Naive thymus-derived CD4-positive, alpha-beta T cell (primary cell): ENCODE measurements at regions of chr4 and their contacts with region 1.

Region 1: DNA sequence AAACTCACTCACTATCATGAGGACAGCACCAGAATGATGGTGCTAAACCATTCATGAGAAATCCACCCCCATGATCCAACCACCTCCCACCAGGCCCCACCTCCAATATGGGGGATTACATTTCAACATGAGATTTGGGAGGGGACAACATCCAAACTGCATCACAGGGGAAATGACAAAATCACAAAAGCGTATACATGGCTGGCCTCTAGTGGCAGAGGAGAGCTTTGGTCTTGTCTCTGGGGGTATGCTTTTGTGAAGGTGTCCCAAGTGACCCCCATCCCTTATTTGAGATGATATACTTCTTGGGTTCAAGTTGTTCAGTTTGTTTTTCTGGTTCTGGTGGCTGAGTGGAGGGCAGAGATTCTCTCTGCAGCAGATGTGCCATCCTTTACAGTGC is 8.5 kb upstream of the SETD7 start:
- DNase-seq: peak in 1 of 9 donors; percentile 15
- ATAC-seq: no peak
- H3K4me3 ChIP-seq: no peak overlapping the region
- H3K4me3 Mint-ChIP-seq: no peak overlapping the region
- H3K27ac ChIP-seq: no peak overlapping the region
- H3K27ac Mint-ChIP-seq: no peak overlapping the region
- H3K4me1 ChIP-seq: peaks cover 9% of the 10 kb centered on the region in 2 donors
- H3K4me1 Mint-ChIP-seq: peaks cover 10 to 17% (median 13%) of the 10 kb centered on the region in 7 donors
- H3K27me3 ChIP-seq: no peaks in the 10 kb centered on the region
- H3K27me3 Mint-ChIP-seq: peaks cover 0 to 4% (median 0%) of the 10 kb centered on the region in 5 donors

Region 2: DNA sequence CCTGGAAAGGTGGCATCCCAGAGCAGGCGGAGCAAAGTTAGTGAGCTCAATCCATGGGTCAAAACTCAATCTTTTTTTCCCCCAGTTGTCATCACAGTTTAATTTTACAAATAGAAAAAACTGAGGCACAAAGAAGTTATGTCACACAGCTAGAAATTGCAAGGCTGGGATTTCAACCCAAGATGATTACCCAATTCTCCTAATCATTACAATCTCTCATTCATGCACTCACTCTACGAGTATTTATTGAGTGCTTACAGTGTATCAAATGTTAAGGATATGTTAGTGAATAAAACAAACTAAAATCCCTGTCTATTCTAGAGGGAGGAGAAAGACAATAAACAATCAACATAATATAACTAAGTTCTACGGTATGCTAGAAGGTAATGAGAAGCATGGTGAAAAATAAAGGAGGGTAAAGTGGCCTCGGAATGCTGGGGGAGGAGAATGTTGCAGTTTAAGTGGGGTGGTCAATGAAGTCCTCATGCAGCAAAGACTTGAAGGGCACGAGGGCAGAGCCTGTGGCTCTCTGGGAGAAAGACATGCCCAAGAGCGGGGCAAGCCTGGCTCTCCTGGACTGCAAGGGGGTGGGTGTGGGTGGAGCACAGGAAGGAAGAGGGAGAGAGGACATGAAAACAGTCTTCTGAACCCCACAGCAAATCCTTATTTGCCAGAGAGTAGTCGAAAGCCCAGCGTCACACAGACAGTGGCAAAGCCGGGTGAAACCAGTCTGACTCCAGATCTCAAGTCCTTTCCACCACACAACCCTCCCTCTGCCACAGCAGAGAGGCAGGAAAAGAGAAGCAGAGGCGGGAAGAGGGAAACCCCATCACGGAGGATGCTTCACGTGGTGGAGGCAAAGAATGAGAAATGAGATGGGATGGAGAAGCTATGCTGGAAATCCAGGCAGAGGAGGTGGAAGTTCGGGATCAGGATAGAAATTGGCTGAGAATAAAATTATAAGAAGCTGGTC is 62.3 kb before region 1 on chr4:
- CTCF ChIA-PET with region 1: no interaction called
- POLR2A ChIA-PET with region 1: no interaction called
- intact Hi-C with region 1: loop called in 1 of 2 experiments (anchors 1 kb)
- DNase-seq: no peak
- ATAC-seq: no peak
- H3K4me3 ChIP-seq: no peak overlapping the region
- H3K4me3 Mint-ChIP-seq: no peak overlapping the region
- H3K27ac ChIP-seq: no peak overlapping the region
- H3K27ac Mint-ChIP-seq: no peak overlapping the region
- H3K4me1 ChIP-seq: no peaks in the 10 kb centered on the region
- H3K4me1 Mint-ChIP-seq: peaks cover 0 to 7% (median 0%) of the 10 kb centered on the region in 7 donors
- H3K27me3 ChIP-seq: no peaks in the 10 kb centered on the region
- H3K27me3 Mint-ChIP-seq: peaks cover 0 to 7% (median 5%) of the 10 kb centered on the region in 5 donors

Region 3: GRCh38 chr4:139550724-139551429 is 13.6 kb before region 1 on chr4:
- CTCF ChIA-PET with region 1: no interaction called
- POLR2A ChIA-PET with region 1: no interaction called
- intact Hi-C with region 1: no loop called
- DNase-seq: no peak
- ATAC-seq: no peak
- H3K4me3 ChIP-seq: no peak overlapping the region
- H3K4me3 Mint-ChIP-seq: no peak overlapping the region
- H3K27ac ChIP-seq: no peak overlapping the region
- H3K27ac Mint-ChIP-seq: no peak overlapping the region
- H3K4me1 ChIP-seq: peaks cover 0 to 11% of the 10 kb centered on the region in 2 donors
- H3K4me1 Mint-ChIP-seq: peaks cover 11 to 31% (median 19%) of the 10 kb centered on the region in 7 donors
- H3K27me3 ChIP-seq: no peaks in the 10 kb centered on the region
- H3K27me3 Mint-ChIP-seq: peaks cover 0 to 11% (median 0%) of the 10 kb centered on the region in 5 donors

Region 4: DNA sequence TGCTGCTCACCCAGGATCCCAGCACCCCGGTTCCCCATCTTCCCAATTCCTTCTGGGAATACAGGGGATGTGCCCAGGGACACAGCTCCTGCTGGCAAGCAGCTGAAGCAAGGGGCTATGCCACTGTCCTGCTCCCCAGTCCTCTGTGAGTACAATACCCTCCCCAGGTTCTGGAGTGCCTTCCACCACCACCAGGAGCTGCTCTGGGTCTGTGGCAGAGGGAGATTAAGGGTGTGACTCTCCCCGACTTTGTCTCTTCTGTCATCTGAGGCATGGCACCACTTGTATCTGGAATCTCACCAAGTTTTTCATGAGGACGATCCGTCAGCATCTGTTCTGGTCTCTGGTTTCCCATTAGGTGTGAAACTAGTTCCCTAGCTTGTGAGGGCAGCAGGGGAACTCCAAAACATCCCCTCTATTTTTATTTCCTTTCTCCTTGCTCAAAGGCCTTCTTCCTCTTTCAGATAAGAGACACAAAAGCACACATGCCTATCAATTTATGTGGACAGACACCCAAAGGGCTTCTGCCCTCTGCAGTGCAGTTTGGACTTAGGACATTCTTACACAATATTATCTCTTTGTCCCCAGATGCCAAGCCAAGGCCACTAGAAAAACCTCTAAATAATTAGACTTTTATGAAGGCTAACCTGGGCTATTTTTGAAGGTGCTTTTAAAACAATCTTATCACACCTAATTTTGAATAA is 128.0 kb after region 1 on chr4:
- CTCF ChIA-PET with region 1: no interaction called
- POLR2A ChIA-PET with region 1: no interaction called
- intact Hi-C with region 1: no loop called
- DNase-seq: no peak
- ATAC-seq: peak; percentile 31
- H3K4me3 ChIP-seq: no peak overlapping the region
- H3K4me3 Mint-ChIP-seq: no peak overlapping the region
- H3K27ac ChIP-seq: no peak overlapping the region
- H3K27ac Mint-ChIP-seq: no peak overlapping the region
- H3K4me1 ChIP-seq: no peaks in the 10 kb centered on the region
- H3K4me1 Mint-ChIP-seq: peaks cover 0 to 8% (median 0%) of the 10 kb centered on the region in 7 donors
- H3K27me3 ChIP-seq: no peaks in the 10 kb centered on the region
- H3K27me3 Mint-ChIP-seq: no peaks in the 10 kb centered on the region

Region 5: DNA sequence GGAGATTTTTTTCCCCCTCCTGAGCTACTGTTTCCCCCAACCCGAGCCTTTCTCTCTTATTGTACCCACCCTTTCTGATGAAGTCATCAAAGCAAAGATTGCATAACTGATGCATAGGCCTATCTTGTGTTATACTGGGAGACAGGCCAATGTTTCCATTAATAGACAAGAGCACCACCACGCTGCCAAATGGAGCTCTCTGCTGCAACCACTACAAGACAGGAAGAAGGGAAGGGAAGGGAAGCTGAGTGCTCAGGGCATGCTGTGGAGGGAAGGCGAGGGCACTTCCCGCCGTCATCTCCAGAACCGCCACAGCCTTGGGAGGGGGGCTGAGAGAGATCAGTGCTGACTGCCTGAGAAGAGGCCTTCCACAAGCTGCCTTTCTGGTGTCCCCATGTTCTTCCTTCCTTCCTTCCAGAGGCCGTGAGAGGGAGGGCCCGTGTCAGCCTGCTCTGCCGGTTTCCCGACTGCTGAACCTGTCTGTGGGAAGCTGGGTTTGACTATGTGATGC is 176.1 kb after region 1 on chr4:
- CTCF ChIA-PET with region 1: no interaction called
- POLR2A ChIA-PET with region 1: no interaction called
- intact Hi-C with region 1: no loop called
- DNase-seq: no peak
- ATAC-seq: peak; percentile 50
- H3K4me3 ChIP-seq: no peak overlapping the region
- H3K4me3 Mint-ChIP-seq: no peak overlapping the region
- H3K27ac ChIP-seq: no peak overlapping the region
- H3K27ac Mint-ChIP-seq: no peak overlapping the region
- H3K4me1 ChIP-seq: peaks cover 0 to 3% of the 10 kb centered on the region in 2 donors
- H3K4me1 Mint-ChIP-seq: peaks cover 4 to 8% (median 6%) of the 10 kb centered on the region in 7 donors
- H3K27me3 ChIP-seq: no peaks in the 10 kb centered on the region
- H3K27me3 Mint-ChIP-seq: peaks cover 18 to 35% (median 27%) of the 10 kb centered on the region in 5 donors